CD4-positive, alpha-beta T cell (primary cell): ENCODE measurements at regions of chr7 and their contacts with region 1.

Region 1: GRCh38 chr7:7681179-7681935 is 37.0 kb downstream of the RPA3 start:
- DNase-seq: peak in 9 of 14 experiments; percentile 9 to 77 (median 19)
- ATAC-seq: peak; percentile 85
- H3K4me3 ChIP-seq: no peak overlapping the region
- H3K4me3 Mint-ChIP-seq: no peak overlapping the region
- H3K27ac ChIP-seq: no peak overlapping the region
- H3K27ac Mint-ChIP-seq: peak overlapping the region; percentile 64
- H3K4me1 ChIP-seq: no peaks in the 10 kb centered on the region
- H3K4me1 Mint-ChIP-seq: peaks cover 45% of the 10 kb centered on the region
- H3K27me3 ChIP-seq: no peaks in the 10 kb centered on the region
- H3K27me3 Mint-ChIP-seq: no peaks in the 10 kb centered on the region
- CTCF ChIP-seq: peak; percentile 78

Region 2: GRCh38 chr7:7640221-7641128 is 40.9 kb before region 1 on chr7 and contains the start of gene UMAD1:
- CTCF ChIA-PET with region 1: interaction called, 12 read pairs
- POLR2A ChIA-PET with region 1: interaction called, 22 read pairs
- intact Hi-C with region 1: no loop called
- DNase-seq: peak; percentile 94 to 100 (median 98)
- ATAC-seq: peak; percentile 83
- H3K4me3 ChIP-seq: peak within 1 kb of the TSS; percentile 88
- H3K4me3 Mint-ChIP-seq: peak within 1 kb of the TSS; percentile 90
- H3K27ac ChIP-seq: peak within 1 kb of the TSS; percentile 98 to 99
- H3K27ac Mint-ChIP-seq: peak within 1 kb of the TSS; percentile 98
- H3K4me1 ChIP-seq: peaks cover 17% of the 10 kb centered on the region
- H3K4me1 Mint-ChIP-seq: peaks cover 59% of the 10 kb centered on the region
- H3K27me3 ChIP-seq: no peaks in the 10 kb centered on the region
- H3K27me3 Mint-ChIP-seq: no peaks in the 10 kb centered on the region
- CTCF ChIP-seq: no peak
- total RNA-seq, gene UMAD1: 11.0 to 15.3 TPM

Region 3: GRCh38 chr7:8035647-8036518 is 354.5 kb after region 1 on chr7:
- CTCF ChIA-PET with region 1: interaction called, 7 read pairs
- POLR2A ChIA-PET with region 1: interaction called, 4 read pairs
- intact Hi-C with region 1: loop called in 1 of 2 experiments (anchors 5 kb)
- DNase-seq: peak in 3 of 14 experiments; percentile 62 to 65 (median 64)
- ATAC-seq: peak; percentile 85
- H3K4me3 ChIP-seq: no peak overlapping the region
- H3K4me3 Mint-ChIP-seq: no peak overlapping the region
- H3K27ac ChIP-seq: no peak overlapping the region
- H3K27ac Mint-ChIP-seq: peak overlapping the region; percentile 69
- H3K4me1 ChIP-seq: peaks cover 19% of the 10 kb centered on the region
- H3K4me1 Mint-ChIP-seq: peaks cover 39% of the 10 kb centered on the region
- H3K27me3 ChIP-seq: no peaks in the 10 kb centered on the region
- H3K27me3 Mint-ChIP-seq: no peaks in the 10 kb centered on the region
- CTCF ChIP-seq: peak; percentile 65

Region 4: DNA sequence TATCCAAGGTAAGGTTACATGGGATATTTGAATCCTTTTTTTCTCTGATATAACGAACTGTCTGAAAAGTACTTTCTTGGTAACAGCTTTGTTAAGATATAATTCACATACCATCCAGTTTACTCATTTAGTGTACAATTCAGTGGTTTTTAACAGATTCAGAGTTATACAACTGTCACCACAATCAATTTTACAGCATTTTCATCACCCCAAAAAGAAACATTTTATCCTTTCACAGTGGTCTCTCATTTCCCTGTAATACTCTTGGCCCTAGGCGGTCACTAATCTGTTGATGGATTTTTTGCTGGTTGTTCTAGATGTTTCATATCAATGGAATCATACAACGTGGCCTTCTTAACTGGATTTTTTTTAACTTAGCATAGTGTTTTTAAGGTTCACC is 378.9 kb after region 1 on chr7:
- CTCF ChIA-PET with region 1: no interaction called
- POLR2A ChIA-PET with region 1: no interaction called
- intact Hi-C with region 1: no loop called
- DNase-seq: no peak
- ATAC-seq: no peak
- H3K4me3 ChIP-seq: no peak overlapping the region
- H3K4me3 Mint-ChIP-seq: no peak overlapping the region
- H3K27ac ChIP-seq: no peak overlapping the region
- H3K27ac Mint-ChIP-seq: peak overlapping the region; percentile 35
- H3K4me1 ChIP-seq: peaks cover 4% of the 10 kb centered on the region
- H3K4me1 Mint-ChIP-seq: peaks cover 29% of the 10 kb centered on the region
- H3K27me3 ChIP-seq: no peaks in the 10 kb centered on the region
- H3K27me3 Mint-ChIP-seq: no peaks in the 10 kb centered on the region
- CTCF ChIP-seq: no peak

Region 5: GRCh38 chr7:8134089-8134733 is 452.9 kb after region 1 on chr7:
- CTCF ChIA-PET with region 1: no interaction called
- POLR2A ChIA-PET with region 1: interaction called, 5 read pairs
- intact Hi-C with region 1: loop called in 1 of 2 experiments (anchors 5 kb)
- DNase-seq: peak in 4 of 14 experiments; percentile 34 to 73 (median 64)
- ATAC-seq: peak; percentile 33
- H3K4me3 ChIP-seq: no peak overlapping the region
- H3K4me3 Mint-ChIP-seq: peak overlapping the region; percentile 25
- H3K27ac ChIP-seq: peak overlapping the region; percentile 36 to 79
- H3K27ac Mint-ChIP-seq: peak overlapping the region; percentile 96
- H3K4me1 ChIP-seq: peaks cover 56% of the 10 kb centered on the region
- H3K4me1 Mint-ChIP-seq: peaks cover 79% of the 10 kb centered on the region
- H3K27me3 ChIP-seq: no peaks in the 10 kb centered on the region
- H3K27me3 Mint-ChIP-seq: no peaks in the 10 kb centered on the region
- CTCF ChIP-seq: no peak

Region 6: GRCh38 chr7:8217200-8218068 is 536.1 kb after region 1 on chr7:
- CTCF ChIA-PET with region 1: interaction called, 7 read pairs
- POLR2A ChIA-PET with region 1: interaction called, 5 read pairs
- intact Hi-C with region 1: loop called (anchors 1 to 5 kb)
- DNase-seq: peak in 5 of 14 experiments; percentile 8 to 84 (median 75)
- ATAC-seq: peak; percentile 71
- H3K4me3 ChIP-seq: no peak overlapping the region
- H3K4me3 Mint-ChIP-seq: no peak overlapping the region
- H3K27ac ChIP-seq: no peak overlapping the region
- H3K27ac Mint-ChIP-seq: no peak overlapping the region
- H3K4me1 ChIP-seq: no peaks in the 10 kb centered on the region
- H3K4me1 Mint-ChIP-seq: peaks cover 5% of the 10 kb centered on the region
- H3K27me3 ChIP-seq: no peaks in the 10 kb centered on the region
- H3K27me3 Mint-ChIP-seq: no peaks in the 10 kb centered on the region
- CTCF ChIP-seq: peak; percentile 87